Right ventricle myocardium superior (tissue), 1 donor: ENCODE measurements at regions of chr17 and their contacts with region 1.

Region 1: GRCh38 chr17:7897773-7898172 is 9.2 kb downstream of the CHD3 start:
- DNase-seq: no peak
- ATAC-seq: peak; percentile 81

Region 2: GRCh38 chr17:7825206-7825990 is 72.4 kb before region 1 on chr17:
- intact Hi-C with region 1: loop called (anchors 10 kb)
- DNase-seq: no peak
- ATAC-seq: no peak

Region 3: GRCh38 chr17:7862692-7863437 is 34.9 kb before region 1 on chr17:
- intact Hi-C with region 1: loop called (anchors 5 kb)
- DNase-seq: no peak
- ATAC-seq: no peak